WTC11 (cell line): ENCODE measurements at regions of chr12 and their contacts with region 1.

Region 1: DNA sequence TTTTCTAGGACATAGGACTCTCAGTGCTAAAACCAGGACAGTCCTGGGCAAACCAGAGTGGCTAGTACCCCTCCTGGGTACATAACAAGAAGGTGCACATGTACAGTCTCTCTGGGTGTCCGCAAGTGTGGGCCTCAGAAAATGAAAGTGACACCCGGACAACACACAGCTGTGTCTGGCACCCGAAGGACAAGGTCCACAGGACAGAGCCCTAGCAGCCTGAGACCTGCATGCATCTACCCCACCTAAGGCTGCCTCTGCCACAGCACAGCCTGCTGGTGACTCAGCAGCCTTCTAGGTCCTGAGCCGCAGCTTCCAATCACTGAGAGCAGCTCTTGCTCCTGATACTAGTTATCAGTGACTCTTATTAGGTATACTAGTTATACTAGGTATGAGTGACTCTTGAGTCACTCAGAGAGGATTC is 784.1 kb upstream of the TBX3 start:
- DNase-seq: peak; percentile 26
- ATAC-seq: peak; percentile 93
- H3K4me3 Mint-ChIP-seq: no peak overlapping the region
- H3K27ac Mint-ChIP-seq: no peak overlapping the region
- H3K4me1 Mint-ChIP-seq: peaks cover 20% of the 10 kb centered on the region
- H3K27me3 Mint-ChIP-seq: no peaks in the 10 kb centered on the region; the same call in 1 of the 2 replicates
- CTCF ChIP-seq: no peak

Region 2: GRCh38 chr12:115456946-115457689 is 11.0 kb before region 1 on chr12:
- CTCF ChIA-PET with region 1: interaction called, 15 read pairs
- POLR2A ChIA-PET with region 1: interaction called, 3 read pairs
- DNase-seq: peak; percentile 56
- ATAC-seq: peak; percentile 95
- H3K4me3 Mint-ChIP-seq: no peak overlapping the region
- H3K27ac Mint-ChIP-seq: no peak overlapping the region
- H3K4me1 Mint-ChIP-seq: peaks cover 30% of the 10 kb centered on the region
- H3K27me3 Mint-ChIP-seq: peaks cover 16% of the 10 kb centered on the region
- CTCF ChIP-seq: 0 out of 2 replicates have a peak, but pooled peaks have one; percentile 22

Region 3: GRCh38 chr12:115687094-115687493 is 219.0 kb after region 1 on chr12:
- CTCF ChIA-PET with region 1: no interaction called
- POLR2A ChIA-PET with region 1: no interaction called
- DNase-seq: no peak
- ATAC-seq: no peak
- H3K4me3 Mint-ChIP-seq: no peak overlapping the region
- H3K27ac Mint-ChIP-seq: no peak overlapping the region
- H3K4me1 Mint-ChIP-seq: 0 out of 2 replicates have a peak, but pooled peaks cover 3% of the 10 kb centered on the region
- H3K27me3 Mint-ChIP-seq: no peaks in the 10 kb centered on the region; the same call in 1 of the 2 replicates
- CTCF ChIP-seq: no peak